Activated CD4-positive, alpha-beta T cell treated with anti-CD3 and anti-CD28 coated beads for 36 hours (primary cell): ENCODE measurements at regions of chr6 and their contacts with region 1.

Region 1: DNA sequence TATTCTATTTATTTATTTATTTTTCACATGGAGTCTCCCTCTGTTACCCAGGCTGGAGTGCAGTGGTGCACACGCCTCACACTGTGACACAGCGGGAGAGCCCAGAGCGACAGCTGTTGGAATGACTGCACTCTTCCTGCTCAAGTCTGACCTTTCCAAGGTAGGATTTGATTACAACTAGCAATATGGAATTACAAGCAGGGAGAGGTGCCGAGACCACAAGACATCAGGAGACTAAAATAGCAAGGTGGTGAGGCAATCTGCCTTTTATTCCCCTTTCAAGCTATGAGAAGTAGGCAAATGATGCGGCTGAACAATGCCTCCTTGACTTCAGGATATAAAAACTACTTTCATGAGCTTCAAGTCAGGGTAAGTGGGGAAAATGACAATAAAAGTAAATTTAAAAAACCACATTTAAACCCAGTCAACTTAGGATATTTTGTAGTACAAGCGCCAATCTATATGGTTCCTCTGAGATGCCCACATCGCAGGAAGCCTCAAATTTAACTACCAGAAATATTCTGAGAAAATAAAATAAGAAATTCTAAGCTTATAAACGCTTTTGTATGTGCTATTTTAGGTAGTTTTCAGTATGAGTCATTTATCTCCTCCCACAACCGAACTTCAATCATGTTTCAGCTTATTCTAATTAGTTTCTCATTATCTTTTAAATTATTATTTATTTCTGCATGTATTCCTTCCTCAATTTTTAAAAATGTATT is 146.9 kb upstream of the SGK1 start:
- DNase-seq: no peak
- ATAC-seq: no peak
- H3K4me3 Mint-ChIP-seq: no peak overlapping the region
- H3K27ac Mint-ChIP-seq: no peak overlapping the region
- H3K4me1 Mint-ChIP-seq: peaks cover 4% of the 10 kb centered on the region
- H3K27me3 Mint-ChIP-seq: no peaks in the 10 kb centered on the region

Region 2: GRCh38 chr6:134165561-134166201 is 299.2 kb before region 1 on chr6:
- CTCF ChIA-PET with region 1: no interaction called
- POLR2A ChIA-PET with region 1: no interaction called
- intact Hi-C with region 1: no loop called
- DNase-seq: no peak
- ATAC-seq: no peak
- H3K4me3 Mint-ChIP-seq: no peak overlapping the region
- H3K27ac Mint-ChIP-seq: no peak overlapping the region
- H3K4me1 Mint-ChIP-seq: peaks cover 6% of the 10 kb centered on the region
- H3K27me3 Mint-ChIP-seq: no peaks in the 10 kb centered on the region

Region 3: GRCh38 chr6:134480593-134480992 is 15.7 kb after region 1 on chr6:
- CTCF ChIA-PET with region 1: no interaction called
- POLR2A ChIA-PET with region 1: interaction called, 10 read pairs
- intact Hi-C with region 1: no loop called
- DNase-seq: no peak
- ATAC-seq: no peak
- H3K4me3 Mint-ChIP-seq: no peak overlapping the region
- H3K27ac Mint-ChIP-seq: no peak overlapping the region
- H3K4me1 Mint-ChIP-seq: peaks cover 7% of the 10 kb centered on the region
- H3K27me3 Mint-ChIP-seq: no peaks in the 10 kb centered on the region